Psoas muscle (tissue), 8 donors: ENCODE measurements at regions of chr2 and their contacts with region 1.

Region 1: GRCh38 chr2:189498205-189498604 is 56.9 kb downstream of the WDR75 start:
- DNase-seq: no peak
- ATAC-seq: no peak
- H3K4me3 ChIP-seq: no peak overlapping the region
- H3K27ac ChIP-seq: no peak overlapping the region
- H3K4me1 ChIP-seq: peaks cover 5% of the 10 kb centered on the region
- H3K27me3 ChIP-seq: no peaks in the 10 kb centered on the region
- CTCF ChIP-seq: peak; percentile 8

Region 2: GRCh38 chr2:189542154-189542882 is 44.1 kb after region 1 on chr2:
- intact Hi-C with region 1: loop called (anchors 5 kb)
- DNase-seq: no peak
- ATAC-seq: no peak
- H3K4me3 ChIP-seq: no peak overlapping the region
- H3K27ac ChIP-seq: no peak overlapping the region
- H3K4me1 ChIP-seq: peaks cover 18% of the 10 kb centered on the region
- H3K27me3 ChIP-seq: no peaks in the 10 kb centered on the region
- CTCF ChIP-seq: no peak

Region 3: DNA sequence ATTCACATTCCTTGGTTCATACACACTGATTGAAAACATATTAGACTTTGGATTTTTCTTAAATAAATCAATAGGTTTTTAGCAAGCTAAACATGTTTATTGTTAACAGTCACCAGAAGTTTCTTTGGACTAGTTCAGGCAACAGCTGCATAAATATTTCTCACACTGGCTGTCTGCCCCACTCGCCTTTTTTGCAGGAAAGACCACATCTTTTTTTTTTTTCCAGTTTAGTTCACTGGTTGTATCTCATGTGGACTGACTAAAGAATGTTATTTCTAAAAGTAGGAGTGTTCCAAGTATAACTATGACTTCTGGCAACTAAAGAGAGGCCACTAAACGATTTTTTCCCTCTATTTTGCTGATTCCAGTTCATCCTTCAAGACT is 51.2 kb after region 1 on chr2:
- intact Hi-C with region 1: loop called (anchors 5 kb)
- DNase-seq: no peak
- ATAC-seq: no peak
- H3K4me3 ChIP-seq: no peak overlapping the region
- H3K27ac ChIP-seq: peak overlapping the region; percentile 59
- H3K4me1 ChIP-seq: peaks cover 18% of the 10 kb centered on the region
- H3K27me3 ChIP-seq: no peaks in the 10 kb centered on the region
- CTCF ChIP-seq: no peak